ENCODE measurements at regions of chr22 and their contacts with region 1.

Region 1: GRCh38 chr22:21867528-21868266 is at the start of gene MAPK1:
- DNase-seq: peak; percentile 88 to 96 (median 92)
- ATAC-seq: peak; percentile 99
- H3K4me3 ChIP-seq: peak within 1 kb of the TSS; percentile 73
- H3K4me3 Mint-ChIP-seq: peak within 1 kb of the TSS; percentile 87 to 99 (median 98)
- H3K27ac ChIP-seq: peak within 1 kb of the TSS; percentile 88
- H3K27ac Mint-ChIP-seq: peak within 1 kb of the TSS; percentile 89 to 99 (median 95)
- H3K4me1 ChIP-seq: peaks cover 23 to 36% of the 10 kb centered on the region in 2 donors
- H3K4me1 Mint-ChIP-seq: peaks cover 36 to 52% (median 47%) of the 10 kb centered on the region in 7 donors
- H3K27me3 ChIP-seq: no peaks in the 10 kb centered on the region
- H3K27me3 Mint-ChIP-seq: peaks cover 0 to 16% (median 0%) of the 10 kb centered on the region in 5 donors
- total RNA-seq, gene MAPK1: 68.9 to 120 (median 105) TPM

Region 2: GRCh38 chr22:21629262-21630149 is 238.2 kb before region 1 on chr22 and contains the start of gene YDJC:
- CTCF ChIA-PET with region 1: no interaction called
- POLR2A ChIA-PET with region 1: no interaction called
- intact Hi-C with region 1: loop called in 1 of 2 experiments (anchors 5 kb)
- DNase-seq: peak; percentile 88 to 97 (median 93)
- ATAC-seq: peak; percentile 95
- H3K4me3 ChIP-seq: peak within 1 kb of the TSS; percentile 88
- H3K4me3 Mint-ChIP-seq: peak within 1 kb of the TSS; percentile 87 to 97 (median 91)
- H3K27ac ChIP-seq: peak within 1 kb of the TSS; percentile 92
- H3K27ac Mint-ChIP-seq: peak within 1 kb of the TSS; percentile 84 to 97 (median 93)
- H3K4me1 ChIP-seq: peaks cover 6 to 26% of the 10 kb centered on the region in 2 donors
- H3K4me1 Mint-ChIP-seq: peaks cover 29 to 44% (median 38%) of the 10 kb centered on the region in 7 donors
- H3K27me3 ChIP-seq: no peaks in the 10 kb centered on the region
- H3K27me3 Mint-ChIP-seq: no peaks in the 10 kb centered on the region
- total RNA-seq, gene YDJC: 29.0 to 56.0 (median 38.0) TPM

Region 3: DNA sequence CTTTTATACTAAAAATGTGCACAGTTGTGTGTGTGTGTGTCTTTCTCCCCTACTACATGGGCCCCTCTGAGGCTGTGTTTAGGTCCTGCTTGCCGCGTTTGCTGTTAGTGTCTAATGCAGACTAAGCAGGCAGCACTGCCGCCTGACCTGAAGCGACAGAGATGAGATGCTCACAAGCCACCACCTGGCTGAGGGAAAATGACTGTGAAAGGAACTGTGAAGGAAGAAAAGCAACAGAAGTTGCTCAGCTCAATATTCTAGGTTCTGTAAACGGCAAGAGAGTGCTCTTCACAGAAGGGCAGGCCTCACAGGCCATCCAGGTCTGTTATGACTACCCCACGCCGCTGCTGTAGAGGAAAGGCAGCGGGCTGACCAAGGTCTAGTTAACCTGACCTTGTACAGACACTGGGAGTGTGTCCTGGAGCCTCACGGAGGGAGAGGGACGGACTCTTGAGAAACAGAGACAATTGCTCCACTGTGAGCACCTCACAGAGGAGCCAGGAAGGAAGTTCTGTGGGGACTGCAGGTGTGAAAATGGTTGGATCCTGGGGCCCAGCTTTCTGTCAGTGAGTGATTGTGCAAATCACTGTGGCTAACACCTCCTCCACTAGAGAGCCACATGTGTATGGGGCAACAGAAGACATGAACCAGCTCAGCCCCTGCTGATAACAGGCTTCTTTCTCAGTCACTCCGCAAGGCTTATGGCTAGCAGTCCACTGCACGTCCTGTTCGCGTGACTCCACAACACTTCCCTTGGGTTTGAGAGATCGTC is 100.8 kb before region 1 on chr22:
- CTCF ChIA-PET with region 1: no interaction called
- POLR2A ChIA-PET with region 1: interaction called, 3 read pairs
- intact Hi-C with region 1: loop called in 1 of 2 experiments (anchors 10 kb)
- DNase-seq: peak in 1 of 9 donors; percentile 68
- ATAC-seq: peak; percentile 82
- H3K4me3 ChIP-seq: peak overlapping the region; percentile 14
- H3K4me3 Mint-ChIP-seq: peak overlapping the region in 2 of 10 donors; percentile 39 to 59
- H3K27ac ChIP-seq: no peak overlapping the region
- H3K27ac Mint-ChIP-seq: peak overlapping the region in 8 of 9 donors; percentile 36 to 80 (median 57)
- H3K4me1 ChIP-seq: peaks cover 0 to 66% of the 10 kb centered on the region in 2 donors
- H3K4me1 Mint-ChIP-seq: peaks cover 6 to 61% (median 20%) of the 10 kb centered on the region in 7 donors
- H3K27me3 ChIP-seq: no peaks in the 10 kb centered on the region
- H3K27me3 Mint-ChIP-seq: no peaks in the 10 kb centered on the region

Region 4: GRCh38 chr22:21816787-21817496 is 50.8 kb before region 1 on chr22:
- CTCF ChIA-PET with region 1: no interaction called
- POLR2A ChIA-PET with region 1: interaction called, 3 read pairs
- intact Hi-C with region 1: loop called in 1 of 2 experiments (anchors 1 kb)
- DNase-seq: peak in 8 of 9 donors; percentile 16 to 83 (median 74)
- ATAC-seq: peak; percentile 95
- H3K4me3 ChIP-seq: peak overlapping the region; percentile 0
- H3K4me3 Mint-ChIP-seq: peak overlapping the region; percentile 73 to 86 (median 76)
- H3K27ac ChIP-seq: peak overlapping the region; percentile 68
- H3K27ac Mint-ChIP-seq: peak overlapping the region; percentile 92 to 98 (median 97)
- H3K4me1 ChIP-seq: peaks cover 39 to 40% of the 10 kb centered on the region in 2 donors
- H3K4me1 Mint-ChIP-seq: peaks cover 44 to 82% (median 65%) of the 10 kb centered on the region in 7 donors
- H3K27me3 ChIP-seq: no peaks in the 10 kb centered on the region
- H3K27me3 Mint-ChIP-seq: no peaks in the 10 kb centered on the region

Region 5: DNA sequence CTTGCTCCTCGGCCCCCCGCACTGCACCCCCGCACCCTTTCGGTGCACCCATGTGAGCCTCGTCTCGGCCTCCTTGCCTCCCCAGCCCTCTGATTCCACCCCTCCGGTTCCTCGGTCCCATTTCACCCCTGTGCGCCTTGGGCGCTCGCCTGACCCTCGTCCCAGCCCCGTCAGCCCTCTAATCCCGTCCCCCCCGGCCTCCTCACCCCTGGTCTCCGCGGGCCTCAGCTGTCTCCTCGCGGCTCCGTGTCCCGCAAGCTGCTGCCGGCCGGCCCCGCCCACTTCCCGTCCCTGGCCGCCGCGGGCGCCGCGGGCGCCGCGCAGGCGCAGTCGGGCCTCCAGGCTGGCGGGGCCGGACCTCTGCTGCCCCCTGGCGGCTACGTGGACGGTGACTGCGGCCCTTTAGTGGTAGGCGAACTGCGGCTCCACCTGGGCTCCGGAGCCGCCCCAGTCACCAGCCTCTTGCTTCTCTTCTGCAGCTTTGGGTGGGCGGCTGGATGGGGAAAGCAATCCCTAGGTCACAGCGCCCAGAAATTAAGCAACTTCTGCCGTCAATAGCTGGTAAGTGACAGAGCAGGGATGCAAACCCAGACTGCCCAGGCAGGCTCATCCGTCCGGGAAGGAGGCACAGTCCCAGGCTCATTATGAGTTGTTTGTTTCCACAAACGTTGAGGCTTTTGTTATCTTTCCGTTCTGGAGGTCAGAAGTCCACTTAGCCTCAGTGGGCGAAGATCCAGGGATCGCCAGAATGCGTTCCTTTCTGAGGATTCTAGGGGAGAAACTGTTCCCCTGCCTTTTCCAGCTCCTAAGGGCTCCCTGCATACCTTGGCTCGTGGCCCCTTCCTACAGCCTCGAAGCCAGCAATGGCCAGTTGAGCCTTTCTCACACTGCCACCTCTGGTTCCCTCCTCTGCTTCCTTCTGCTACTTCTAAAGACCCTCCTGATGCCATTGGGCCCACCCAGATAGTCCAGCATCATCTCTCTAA is 85.2 kb after region 1 on chr22 and contains the start of gene PPM1F:
- CTCF ChIA-PET with region 1: no interaction called
- POLR2A ChIA-PET with region 1: no interaction called
- intact Hi-C with region 1: loop called in 1 of 2 experiments (anchors 5 kb)
- DNase-seq: peak; percentile 79 to 100 (median 92)
- ATAC-seq: peak; percentile 98
- H3K4me3 ChIP-seq: peak within 1 kb of the TSS; percentile 79
- H3K4me3 Mint-ChIP-seq: peak within 1 kb of the TSS; percentile 80 to 90 (median 88)
- H3K27ac ChIP-seq: peak within 1 kb of the TSS; percentile 78
- H3K27ac Mint-ChIP-seq: peak within 1 kb of the TSS in 8 of 9 donors; percentile 43 to 80 (median 72)
- H3K4me1 ChIP-seq: peaks cover 7% of the 10 kb centered on the region in 2 donors
- H3K4me1 Mint-ChIP-seq: peaks cover 16 to 25% (median 19%) of the 10 kb centered on the region in 7 donors
- H3K27me3 ChIP-seq: no peaks in the 10 kb centered on the region
- H3K27me3 Mint-ChIP-seq: no peaks in the 10 kb centered on the region
- total RNA-seq, gene PPM1F: 21.3 to 58.0 (median 27.8) TPM